ENCODE measurements at regions of chr7 and their contacts with region 1.

Region 1: DNA sequence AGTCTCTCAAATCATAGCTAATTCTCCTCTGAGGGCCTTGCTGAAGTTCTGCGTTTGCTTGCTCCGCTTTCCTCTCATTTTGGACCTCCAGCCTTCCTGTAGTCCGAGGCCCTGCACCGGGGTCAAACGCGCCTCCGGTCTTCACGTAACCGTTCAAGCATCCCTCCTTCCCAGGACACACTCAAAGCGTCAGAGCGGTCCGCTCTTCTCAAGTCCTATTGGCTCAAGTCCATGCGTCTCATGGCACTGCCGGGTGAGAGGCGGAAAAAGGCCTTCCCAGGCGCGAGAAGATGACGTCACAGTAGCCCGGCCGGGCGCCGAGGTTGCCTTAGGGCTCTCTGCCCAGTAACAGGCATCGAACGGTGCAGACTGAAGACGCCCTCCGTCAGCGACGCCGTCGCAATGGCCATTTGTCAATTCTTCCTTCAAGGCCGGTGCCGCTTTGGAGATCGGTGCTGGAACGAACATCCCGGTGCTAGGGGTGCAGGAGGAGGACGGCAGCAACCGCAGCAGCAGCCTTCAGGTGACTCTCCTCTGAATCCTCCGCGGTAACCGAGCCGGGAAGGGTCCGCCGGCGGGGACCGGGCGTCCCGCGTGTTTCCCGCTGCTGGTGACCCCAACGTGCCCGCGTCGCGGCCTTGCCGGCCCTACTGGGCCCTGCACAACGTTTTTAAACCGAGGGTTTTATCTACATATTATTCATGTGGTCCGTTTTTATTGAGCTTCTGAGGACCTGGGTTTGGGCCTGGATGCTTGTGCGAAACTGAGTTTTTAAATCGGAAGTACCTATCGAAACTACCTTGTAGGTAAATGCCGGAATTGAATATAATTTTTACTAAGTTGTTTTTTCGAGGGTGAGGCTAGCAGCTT is at the start of gene NUP42:
- DNase-seq: peak; percentile 90 to 98
- H3K4me3 ChIP-seq: peak within 1 kb of the TSS; percentile 63 to 93
- H3K27ac ChIP-seq: peak within 1 kb of the TSS; percentile 90 to 96
- H3K4me1 ChIP-seq: peaks cover 3 to 15% of the 10 kb centered on the region in 2 donors
- H3K27me3 ChIP-seq: no peaks in the 10 kb centered on the region
- CTCF ChIP-seq: peak in 1 of 3 experiments; percentile 13
- total RNA-seq, gene NUP42: 16.7 TPM

Region 2: GRCh38 chr7:23105644-23106056 is 76.3 kb before region 1 on chr7 and contains the start of gene KLHL7:
- intact Hi-C with region 1: loop called (anchors 1 kb)
- DNase-seq: peak; percentile 87 to 99
- H3K4me3 ChIP-seq: peak within 1 kb of the TSS; percentile 88 to 96
- H3K27ac ChIP-seq: peak within 1 kb of the TSS; percentile 89 to 92
- H3K4me1 ChIP-seq: peaks cover 4 to 26% of the 10 kb centered on the region in 2 donors
- H3K27me3 ChIP-seq: no peaks in the 10 kb centered on the region
- CTCF ChIP-seq: no peak
- total RNA-seq, gene KLHL7: 1.2 TPM

Region 3: GRCh38 chr7:23247603-23248335 is 65.8 kb after region 1 on chr7:
- intact Hi-C with region 1: loop called (anchors 2 kb)
- DNase-seq: peak in 1 of 2 donors; percentile 66
- H3K4me3 ChIP-seq: peak overlapping the region; percentile 47 to 73
- H3K27ac ChIP-seq: peak overlapping the region; percentile 90 to 91
- H3K4me1 ChIP-seq: peaks cover 0 to 18% of the 10 kb centered on the region in 2 donors
- H3K27me3 ChIP-seq: no peaks in the 10 kb centered on the region
- CTCF ChIP-seq: no peak

Region 4: DNA sequence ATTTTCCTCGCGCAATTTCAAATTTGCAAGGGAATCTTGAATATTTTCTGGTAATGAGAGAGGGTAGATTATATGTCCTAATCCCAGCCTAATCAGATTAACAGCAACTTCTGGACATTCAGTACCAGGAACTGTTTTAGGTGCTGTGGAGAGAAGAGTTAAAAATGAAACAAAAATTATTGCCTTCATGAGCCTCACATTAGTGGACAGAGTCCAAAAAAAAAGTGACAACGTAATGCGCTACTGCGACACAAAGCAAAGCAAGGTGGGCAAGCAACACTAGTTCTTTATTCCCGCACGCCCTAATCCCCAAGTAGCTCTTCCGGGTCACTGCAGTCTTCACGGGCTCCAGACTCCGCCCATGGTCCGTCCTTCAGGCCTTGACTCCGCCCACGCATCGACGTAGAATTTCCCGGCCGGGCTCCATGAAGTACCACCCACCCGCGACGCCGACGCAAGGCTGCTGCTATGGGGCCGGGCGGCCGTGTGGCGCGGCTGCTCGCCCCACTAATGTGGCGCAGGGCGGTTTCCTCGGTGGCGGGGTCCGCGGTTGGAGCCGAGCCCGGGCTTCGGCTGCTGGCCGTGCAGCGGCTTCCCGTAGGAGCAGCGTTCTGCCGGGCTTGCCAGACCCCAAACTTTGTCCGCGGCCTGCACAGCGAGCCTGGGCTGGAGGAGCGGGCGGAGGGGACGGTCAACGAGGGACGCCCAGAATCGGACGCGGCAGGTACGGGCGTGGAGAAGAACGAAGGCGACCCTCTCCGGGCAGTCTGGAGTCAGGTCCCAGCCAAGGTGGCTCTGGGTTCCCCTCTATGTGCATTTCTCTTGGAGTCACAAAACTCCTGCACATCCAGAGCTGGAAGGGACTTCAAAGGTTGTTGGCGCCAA is 117.2 kb after region 1 on chr7 and contains the start of gene MALSU1:
- intact Hi-C with region 1: loop called (anchors 1 kb)
- DNase-seq: peak; percentile 79 to 99
- H3K4me3 ChIP-seq: peak within 1 kb of the TSS; percentile 78 to 91
- H3K27ac ChIP-seq: peak within 1 kb of the TSS; percentile 75 to 79
- H3K4me1 ChIP-seq: peaks cover 8 to 17% of the 10 kb centered on the region in 2 donors
- H3K27me3 ChIP-seq: no peaks in the 10 kb centered on the region
- CTCF ChIP-seq: no peak
- total RNA-seq, gene MALSU1: 22.4 TPM

Region 5: GRCh38 chr7:23597094-23598091 is 415.5 kb after region 1 on chr7 and contains the start of gene CCDC126:
- intact Hi-C with region 1: loop called (anchors 1 kb)
- DNase-seq: peak; percentile 75 to 96
- H3K4me3 ChIP-seq: peak within 1 kb of the TSS; percentile 72 to 94
- H3K27ac ChIP-seq: peak within 1 kb of the TSS; percentile 94 to 100
- H3K4me1 ChIP-seq: peaks cover 0 to 8% of the 10 kb centered on the region in 2 donors
- H3K27me3 ChIP-seq: no peaks in the 10 kb centered on the region
- CTCF ChIP-seq: no peak
- total RNA-seq, gene CCDC126: 140 TPM

Region 6: DNA sequence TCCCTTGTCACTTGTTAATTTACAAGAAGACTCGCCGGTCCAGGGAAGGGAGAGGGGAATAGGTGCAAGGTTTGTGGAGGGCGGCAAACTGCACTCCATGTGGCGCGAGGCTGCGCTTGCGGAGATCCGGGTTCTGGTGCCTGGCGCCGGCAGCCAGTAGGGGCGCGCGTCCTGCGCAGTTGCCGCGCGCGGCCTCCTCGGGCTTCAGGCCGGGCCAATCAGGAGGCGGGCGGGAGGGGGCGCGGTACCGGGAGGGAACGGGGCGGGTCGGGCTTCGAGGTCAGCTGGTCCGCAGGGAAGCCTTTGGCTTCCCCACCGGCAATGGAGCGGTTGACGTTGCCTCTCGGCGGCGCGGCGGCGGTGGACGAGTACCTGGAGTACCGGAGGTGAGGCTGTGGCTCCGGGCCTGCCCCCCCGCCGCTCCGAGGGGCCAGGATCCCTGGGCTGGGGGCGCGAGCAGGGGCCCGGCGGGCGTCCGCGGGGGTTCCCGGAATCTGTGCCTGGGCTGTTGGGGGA is 498.0 kb after region 1 on chr7 and contains the start of gene FAM221A:
- intact Hi-C with region 1: loop called (anchors 10 kb)
- DNase-seq: peak; percentile 30 to 93
- H3K4me3 ChIP-seq: peak within 1 kb of the TSS; percentile 84 to 95
- H3K27ac ChIP-seq: peak within 1 kb of the TSS; percentile 85 to 87
- H3K4me1 ChIP-seq: peaks cover 0 to 5% of the 10 kb centered on the region in 2 donors
- H3K27me3 ChIP-seq: no peaks in the 10 kb centered on the region
- CTCF ChIP-seq: peak; percentile 34 to 88 (median 87)
- total RNA-seq, gene FAM221A: 10.1 TPM

Region 7: GRCh38 chr7:24444666-24445440 is 1262.9 kb after region 1 on chr7:
- intact Hi-C with region 1: no loop called
- DNase-seq: no peak
- H3K4me3 ChIP-seq: no peak overlapping the region
- H3K27ac ChIP-seq: no peak overlapping the region
- H3K4me1 ChIP-seq: no peaks in the 10 kb centered on the region
- H3K27me3 ChIP-seq: no peaks in the 10 kb centered on the region
- CTCF ChIP-seq: no peak

Measured in ascending aorta (tissue), 2 donors.